B cell (primary cell): ENCODE measurements at regions of chr17 and their contacts with region 1.

Region 1: GRCh38 chr17:57255776-57256681 is at the start of gene MSI2:
- DNase-seq: peak; percentile 94
- ATAC-seq: peak; percentile 79
- H3K4me3 ChIP-seq: peak within 1 kb of the TSS; percentile 67 to 97 (median 76)
- H3K4me3 Mint-ChIP-seq: peak within 1 kb of the TSS; percentile 92
- H3K27ac ChIP-seq: peak within 1 kb of the TSS; percentile 65 to 66
- H3K27ac Mint-ChIP-seq: peak within 1 kb of the TSS; percentile 85
- H3K4me1 ChIP-seq: peaks cover 34 to 44% of the 10 kb centered on the region in 2 donors
- H3K4me1 Mint-ChIP-seq: peaks cover 38% of the 10 kb centered on the region
- H3K27me3 ChIP-seq: no peaks in the 10 kb centered on the region
- H3K27me3 Mint-ChIP-seq: no peaks in the 10 kb centered on the region
- CTCF ChIP-seq: no peak
- total RNA-seq, gene MSI2: 196 and 222 TPM in 2 replicates

Region 2: DNA sequence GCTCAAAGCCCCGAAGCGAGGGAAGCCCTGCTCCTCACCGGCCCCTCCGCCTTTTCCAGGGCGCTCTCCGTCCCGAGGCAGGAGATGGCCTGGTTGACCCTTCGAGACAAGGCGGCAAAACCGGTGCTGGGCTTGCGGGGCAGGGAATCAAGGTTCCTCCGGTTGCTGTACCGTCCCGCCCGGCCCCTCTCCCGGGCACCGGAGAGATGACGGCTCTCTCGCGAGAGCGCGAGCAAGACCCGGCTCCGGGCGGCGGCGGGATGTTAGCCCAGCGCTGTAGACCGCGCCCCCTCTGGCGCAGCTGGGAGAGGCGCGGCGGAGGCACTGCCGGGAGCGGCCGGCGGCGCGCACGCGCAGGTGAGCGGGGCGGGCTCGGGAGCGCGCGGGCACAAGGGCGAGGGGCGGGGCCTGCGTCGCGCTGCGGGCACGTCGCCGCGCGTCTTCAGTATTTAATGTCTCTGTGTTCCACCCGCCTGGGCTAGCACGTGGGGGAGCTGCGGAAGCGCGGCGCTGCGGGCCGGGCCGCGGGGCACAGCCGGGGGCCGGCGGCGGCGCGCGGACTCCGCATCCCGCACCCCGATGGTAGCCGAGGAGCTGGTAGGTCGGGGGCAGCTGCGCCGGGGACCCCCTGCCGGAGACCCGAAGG is 171.1 kb before region 1 on chr17 and contains the start of gene AKAP1:
- CTCF ChIA-PET with region 1: no interaction called
- POLR2A ChIA-PET with region 1: interaction called, 3 read pairs
- intact Hi-C with region 1: loop called (anchors 2 kb)
- DNase-seq: peak; percentile 97
- ATAC-seq: peak; percentile 85
- H3K4me3 ChIP-seq: peak within 1 kb of the TSS; percentile 71 to 95 (median 85)
- H3K4me3 Mint-ChIP-seq: peak within 1 kb of the TSS; percentile 95
- H3K27ac ChIP-seq: peak within 1 kb of the TSS; percentile 77 to 86
- H3K27ac Mint-ChIP-seq: peak within 1 kb of the TSS; percentile 91
- H3K4me1 ChIP-seq: peaks cover 14 to 16% of the 10 kb centered on the region in 2 donors
- H3K4me1 Mint-ChIP-seq: peaks cover 20% of the 10 kb centered on the region
- H3K27me3 ChIP-seq: peaks cover 0 to 3% (median 0%) of the 10 kb centered on the region in 4 experiments
- H3K27me3 Mint-ChIP-seq: no peaks in the 10 kb centered on the region
- CTCF ChIP-seq: no peak
- total RNA-seq, gene AKAP1: 20.1 and 27.1 TPM in 2 replicates

Region 3: DNA sequence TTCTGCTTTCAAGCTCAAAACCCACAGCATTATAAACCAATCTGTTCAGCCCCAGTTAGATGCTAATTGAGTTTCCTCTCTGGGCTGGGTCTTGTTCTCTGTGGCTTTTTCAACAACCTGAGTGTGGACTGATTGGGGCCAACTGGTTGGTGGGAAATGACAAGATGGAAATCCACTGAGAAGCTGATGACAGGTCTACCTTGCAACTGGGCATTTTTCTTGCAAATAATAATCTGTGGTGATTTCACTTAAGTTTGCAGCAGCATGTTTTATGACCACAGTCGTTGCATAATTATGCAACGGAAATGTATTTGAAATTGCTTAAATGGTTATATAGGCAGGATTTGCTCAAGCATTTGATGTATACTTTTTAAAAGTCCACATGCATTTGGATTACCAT is 101.1 kb before region 1 on chr17:
- CTCF ChIA-PET with region 1: no interaction called
- POLR2A ChIA-PET with region 1: no interaction called
- intact Hi-C with region 1: no loop called
- DNase-seq: no peak
- ATAC-seq: no peak
- H3K4me3 ChIP-seq: no peak overlapping the region
- H3K4me3 Mint-ChIP-seq: no peak overlapping the region
- H3K27ac ChIP-seq: no peak overlapping the region
- H3K27ac Mint-ChIP-seq: no peak overlapping the region
- H3K4me1 ChIP-seq: no peaks in the 10 kb centered on the region
- H3K4me1 Mint-ChIP-seq: no peaks in the 10 kb centered on the region
- H3K27me3 ChIP-seq: peaks cover 0 to 5% (median 0%) of the 10 kb centered on the region in 4 experiments
- H3K27me3 Mint-ChIP-seq: peaks cover 23% of the 10 kb centered on the region
- CTCF ChIP-seq: no peak

Region 4: DNA sequence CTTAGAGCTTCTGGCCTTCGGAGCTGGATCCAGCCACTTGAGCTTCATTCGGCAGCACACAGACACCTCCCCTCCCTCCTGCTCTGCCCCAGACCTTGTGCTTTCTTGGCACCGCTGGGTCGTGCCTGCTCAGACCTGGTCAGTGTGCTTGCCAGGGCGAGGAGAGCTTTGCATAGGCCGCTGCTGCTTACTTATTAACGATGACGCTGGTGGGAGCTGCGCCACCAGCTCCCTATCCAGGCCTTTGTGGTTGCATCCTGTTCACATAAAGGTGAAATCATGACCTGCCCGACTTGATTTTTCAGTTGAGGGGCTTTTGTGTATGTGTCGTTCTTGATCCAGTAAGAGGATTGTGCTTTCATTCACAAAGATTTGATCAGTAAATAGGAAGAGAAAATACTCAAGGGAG is 101.4 kb after region 1 on chr17:
- CTCF ChIA-PET with region 1: no interaction called
- POLR2A ChIA-PET with region 1: no interaction called
- intact Hi-C with region 1: loop called (anchors 5 kb)
- DNase-seq: peak; percentile 29
- ATAC-seq: no peak
- H3K4me3 ChIP-seq: peak overlapping the region in 4 of 5 experiments; percentile 14 to 52 (median 26)
- H3K4me3 Mint-ChIP-seq: peak overlapping the region; percentile 84
- H3K27ac ChIP-seq: peak overlapping the region; percentile 43 to 59
- H3K27ac Mint-ChIP-seq: peak overlapping the region; percentile 78
- H3K4me1 ChIP-seq: peaks cover 40 to 44% of the 10 kb centered on the region in 2 donors
- H3K4me1 Mint-ChIP-seq: peaks cover 53% of the 10 kb centered on the region
- H3K27me3 ChIP-seq: no peaks in the 10 kb centered on the region
- H3K27me3 Mint-ChIP-seq: no peaks in the 10 kb centered on the region
- CTCF ChIP-seq: no peak

Region 5: DNA sequence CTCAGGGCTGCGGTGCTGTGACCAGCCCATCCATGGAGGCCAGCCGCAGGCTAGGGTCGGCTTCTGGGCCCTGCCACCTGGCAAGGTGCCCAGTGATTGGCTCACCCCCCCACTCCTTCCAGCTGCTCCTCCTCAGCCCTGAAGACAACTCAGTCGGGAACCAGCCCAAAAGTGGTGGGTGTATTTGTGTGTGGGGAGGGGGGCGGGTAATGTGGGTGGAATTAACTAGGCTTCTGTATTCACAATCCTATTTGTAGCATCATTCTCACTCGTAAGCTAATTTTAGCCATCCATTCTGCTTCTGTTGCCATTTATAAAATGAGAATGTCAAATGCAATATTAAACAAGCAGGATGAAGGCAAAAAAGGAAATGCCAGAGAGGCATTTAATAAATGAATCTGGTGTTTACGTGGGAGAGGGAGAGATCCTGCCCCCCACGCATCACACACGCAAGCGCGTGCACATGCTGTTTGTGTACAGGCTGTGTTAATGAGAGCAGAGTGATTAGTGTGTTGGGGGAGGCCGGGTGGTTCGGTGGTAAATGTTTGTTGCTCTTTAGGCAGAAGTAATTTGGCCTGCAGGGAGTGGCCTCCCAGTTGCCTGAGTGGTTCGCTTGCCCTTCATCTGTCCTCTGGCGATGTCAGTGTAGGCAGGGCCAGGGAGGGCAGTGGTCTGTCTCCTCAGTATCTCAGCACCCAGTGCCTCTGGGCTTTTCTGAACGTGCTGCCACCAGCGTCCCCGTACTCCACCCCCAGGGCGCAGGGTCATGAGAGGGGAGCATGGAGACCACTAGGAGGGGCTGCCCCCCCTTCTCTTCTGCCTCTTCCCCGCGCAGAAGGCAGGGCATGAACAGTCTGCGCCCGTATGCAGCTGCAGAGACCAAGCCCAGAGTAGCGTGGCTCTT is 349.0 kb after region 1 on chr17:
- CTCF ChIA-PET with region 1: interaction called, 3 read pairs
- POLR2A ChIA-PET with region 1: no interaction called
- intact Hi-C with region 1: loop called (anchors 5 kb)
- DNase-seq: peak; percentile 88
- ATAC-seq: peak; percentile 77
- H3K4me3 ChIP-seq: peak overlapping the region in 1 of 5 experiments; percentile 42
- H3K4me3 Mint-ChIP-seq: peak overlapping the region; percentile 79
- H3K27ac ChIP-seq: peak overlapping the region; percentile 73 to 78
- H3K27ac Mint-ChIP-seq: peak overlapping the region; percentile 96
- H3K4me1 ChIP-seq: peaks cover 44 to 60% of the 10 kb centered on the region in 2 donors
- H3K4me1 Mint-ChIP-seq: peaks cover 62% of the 10 kb centered on the region
- H3K27me3 ChIP-seq: no peaks in the 10 kb centered on the region
- H3K27me3 Mint-ChIP-seq: no peaks in the 10 kb centered on the region
- CTCF ChIP-seq: peak; percentile 41

Region 6: DNA sequence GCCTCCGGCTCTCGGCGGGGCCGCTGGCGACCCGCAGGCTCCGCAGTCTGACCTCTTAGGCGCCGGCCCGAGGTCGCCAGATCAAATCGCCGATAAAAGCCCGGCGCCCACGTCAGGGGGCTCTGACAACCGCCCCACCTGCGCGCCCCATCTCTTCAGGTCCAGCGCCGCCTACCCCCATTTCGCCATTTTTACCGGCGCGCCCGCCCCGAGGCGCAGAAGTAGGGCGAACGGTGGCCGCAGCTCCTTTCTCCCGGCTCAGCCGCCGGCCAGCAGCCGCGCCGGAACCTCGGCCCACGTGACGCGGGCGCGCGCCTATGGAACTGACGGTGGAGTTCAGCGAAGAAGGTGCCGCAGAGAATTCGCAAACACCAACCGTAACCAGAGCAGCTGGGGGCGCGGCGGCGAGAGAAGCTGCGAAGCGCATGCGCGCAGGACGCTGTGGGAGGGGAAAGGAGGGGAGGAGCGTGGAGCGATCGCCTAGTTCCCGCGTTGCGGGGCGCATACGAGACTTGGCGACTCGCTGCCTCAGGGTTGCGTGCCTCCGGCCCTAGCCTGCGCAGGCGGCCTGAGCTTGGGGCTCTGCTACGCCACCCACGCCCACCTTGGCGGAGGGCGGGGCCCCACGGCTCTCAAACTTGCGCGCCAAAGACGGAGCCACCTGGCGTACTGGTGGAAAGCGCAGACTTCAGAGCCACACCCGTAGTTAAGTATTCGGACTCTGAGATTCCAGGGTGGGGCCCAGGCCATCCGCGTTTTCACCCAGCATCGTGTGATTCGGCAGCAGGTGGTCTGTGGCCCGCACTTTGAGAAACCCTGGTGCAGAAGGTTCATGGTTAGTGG is 1850.7 kb after region 1 on chr17 and contains the start of gene TRIM37:
- CTCF ChIA-PET with region 1: no interaction called
- POLR2A ChIA-PET with region 1: no interaction called
- intact Hi-C with region 1: loop called (anchors 10 kb)
- DNase-seq: peak; percentile 100
- ATAC-seq: peak; percentile 96
- H3K4me3 ChIP-seq: peak within 1 kb of the TSS; percentile 56 to 92 (median 83)
- H3K4me3 Mint-ChIP-seq: peak within 1 kb of the TSS; percentile 94
- H3K27ac ChIP-seq: peak within 1 kb of the TSS; percentile 86 to 88
- H3K27ac Mint-ChIP-seq: peak within 1 kb of the TSS; percentile 93
- H3K4me1 ChIP-seq: peaks cover 11 to 12% of the 10 kb centered on the region in 2 donors
- H3K4me1 Mint-ChIP-seq: peaks cover 27% of the 10 kb centered on the region
- H3K27me3 ChIP-seq: no peaks in the 10 kb centered on the region
- H3K27me3 Mint-ChIP-seq: no peaks in the 10 kb centered on the region
- CTCF ChIP-seq: no peak
- total RNA-seq, gene TRIM37: 28.3 and 33.8 TPM in 2 replicates